ENCODE measurements at regions of chr17 and their contacts with region 1.

Region 1: DNA sequence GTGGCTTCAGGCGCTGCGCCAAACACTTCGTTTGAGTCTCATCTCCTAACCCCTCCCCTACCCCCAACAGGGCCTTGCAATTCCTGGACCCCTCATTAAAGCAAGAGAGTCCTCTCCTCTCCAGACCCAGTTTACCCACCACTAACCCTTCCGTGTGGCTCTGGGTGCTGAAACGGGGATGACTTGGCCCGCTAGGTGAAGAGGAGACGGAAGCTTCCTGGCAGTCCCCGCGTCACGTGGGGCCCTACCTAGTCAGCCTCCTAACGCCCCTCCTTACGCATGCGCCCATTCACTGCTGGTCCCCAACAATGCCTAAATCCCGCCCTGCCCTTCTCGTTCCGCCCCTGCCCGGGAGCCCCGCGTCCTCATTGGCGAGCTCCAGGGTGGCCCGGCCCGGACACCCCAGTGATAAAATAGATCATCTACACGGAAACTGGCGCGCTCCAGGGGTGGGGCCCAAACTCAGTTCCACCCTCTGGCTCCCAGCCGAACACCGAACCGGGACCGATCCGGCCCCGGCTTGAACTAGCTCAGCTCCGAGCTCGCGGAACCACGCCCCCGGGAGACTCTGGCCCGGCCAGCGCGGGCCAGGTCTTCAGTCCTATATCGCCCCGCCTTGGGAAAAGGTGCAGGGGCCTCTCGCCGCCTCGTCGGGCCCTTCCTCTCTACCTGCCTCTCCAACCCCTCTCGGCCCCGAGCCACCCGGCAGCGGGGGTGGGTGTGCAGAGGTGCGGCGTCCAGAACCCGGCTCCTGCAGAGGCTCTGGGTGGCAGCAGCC is at the start of gene SLC16A13:
- DNase-seq: peak; percentile 99
- H3K4me3 Mint-ChIP-seq: peak within 1 kb of the TSS; percentile 94
- H3K27ac Mint-ChIP-seq: peak within 1 kb of the TSS; percentile 99
- H3K4me1 Mint-ChIP-seq: peaks cover 48% of the 10 kb centered on the region
- H3K27me3 Mint-ChIP-seq: no peaks in the 10 kb centered on the region
- total RNA-seq, gene SLC16A13: 10.4 to 10.7 TPM

Region 2: GRCh38 chr17:7021993-7022778 is 13.6 kb before region 1 on chr17:
- CTCF ChIA-PET with region 1: interaction called, 24 read pairs
- POLR2A ChIA-PET with region 1: interaction called, 22 read pairs
- intact Hi-C with region 1: loop called (anchors 1 kb)
- DNase-seq: peak; percentile 87
- H3K4me3 Mint-ChIP-seq: peak overlapping the region; percentile 61
- H3K27ac Mint-ChIP-seq: peak overlapping the region; percentile 45
- H3K4me1 Mint-ChIP-seq: peaks cover 38% of the 10 kb centered on the region
- H3K27me3 Mint-ChIP-seq: peaks cover 2% of the 10 kb centered on the region

Region 3: GRCh38 chr17:7060165-7060891 is 24.5 kb after region 1 on chr17:
- CTCF ChIA-PET with region 1: interaction called, 3 read pairs
- POLR2A ChIA-PET with region 1: no interaction called
- intact Hi-C with region 1: loop called (anchors 1 kb)
- DNase-seq: peak; percentile 75
- H3K4me3 Mint-ChIP-seq: no peak overlapping the region
- H3K27ac Mint-ChIP-seq: peak overlapping the region; percentile 91
- H3K4me1 Mint-ChIP-seq: peaks cover 24% of the 10 kb centered on the region
- H3K27me3 Mint-ChIP-seq: peaks cover 14% of the 10 kb centered on the region

Measured in activated CD4-positive, alpha-beta memory T cell treated with anti-CD3 and anti-CD28 coated beads for 36 hours (primary cell).